ENCODE measurements at regions of chr10 and their contacts with region 1.

Region 1: DNA sequence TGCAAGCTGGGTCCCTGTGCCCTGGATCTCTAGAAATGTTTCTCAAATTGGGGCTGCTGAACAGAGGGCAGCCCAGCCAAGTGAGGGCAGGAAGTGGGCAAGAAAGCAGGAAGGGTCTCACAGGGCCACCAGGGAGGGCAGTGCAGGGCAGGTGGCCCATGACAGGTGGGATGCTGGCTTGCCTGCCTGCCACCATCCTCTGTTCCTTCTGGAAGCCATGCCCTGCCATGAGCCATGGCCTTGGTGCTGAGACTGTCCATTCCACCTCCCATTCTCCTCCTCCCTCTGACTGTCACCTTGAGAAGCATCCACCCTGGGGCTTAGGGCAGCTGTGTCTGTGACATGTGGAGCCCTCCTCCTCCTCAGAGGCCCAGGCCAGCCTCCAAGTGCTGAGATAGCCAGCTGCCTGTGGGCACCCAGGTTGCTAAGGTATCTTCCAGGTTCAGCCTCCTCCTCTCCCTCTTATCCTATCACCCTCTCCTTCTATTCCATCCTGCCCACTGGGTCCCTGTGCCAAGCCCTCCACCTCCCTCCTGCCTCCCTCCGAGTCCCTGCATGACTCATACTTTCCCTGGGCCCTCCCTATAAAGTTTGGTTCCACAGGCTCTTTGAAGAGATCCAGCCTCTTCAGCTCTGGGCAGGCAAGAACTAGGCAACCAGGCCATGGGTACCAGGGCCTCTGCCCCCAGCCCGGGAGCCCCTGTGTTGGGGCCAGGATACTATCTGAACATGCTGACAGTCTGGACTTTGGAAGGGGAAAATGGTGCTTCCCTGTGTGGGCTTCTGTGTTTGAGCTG is 1.3 kb downstream of the VSIR start:
- DNase-seq: peak in 3 of 14 experiments; percentile 44 to 54 (median 52)
- ATAC-seq: no peak
- H3K4me3 ChIP-seq: peak overlapping the region; percentile 90
- H3K4me3 Mint-ChIP-seq: peak overlapping the region; percentile 94
- H3K27ac ChIP-seq: peak overlapping the region; percentile 75 to 88
- H3K27ac Mint-ChIP-seq: peak overlapping the region; percentile 95
- H3K4me1 ChIP-seq: peaks cover 78% of the 10 kb centered on the region
- H3K4me1 Mint-ChIP-seq: peaks cover 88% of the 10 kb centered on the region
- H3K27me3 ChIP-seq: no peaks in the 10 kb centered on the region
- H3K27me3 Mint-ChIP-seq: no peaks in the 10 kb centered on the region
- CTCF ChIP-seq: no peak

Region 2: DNA sequence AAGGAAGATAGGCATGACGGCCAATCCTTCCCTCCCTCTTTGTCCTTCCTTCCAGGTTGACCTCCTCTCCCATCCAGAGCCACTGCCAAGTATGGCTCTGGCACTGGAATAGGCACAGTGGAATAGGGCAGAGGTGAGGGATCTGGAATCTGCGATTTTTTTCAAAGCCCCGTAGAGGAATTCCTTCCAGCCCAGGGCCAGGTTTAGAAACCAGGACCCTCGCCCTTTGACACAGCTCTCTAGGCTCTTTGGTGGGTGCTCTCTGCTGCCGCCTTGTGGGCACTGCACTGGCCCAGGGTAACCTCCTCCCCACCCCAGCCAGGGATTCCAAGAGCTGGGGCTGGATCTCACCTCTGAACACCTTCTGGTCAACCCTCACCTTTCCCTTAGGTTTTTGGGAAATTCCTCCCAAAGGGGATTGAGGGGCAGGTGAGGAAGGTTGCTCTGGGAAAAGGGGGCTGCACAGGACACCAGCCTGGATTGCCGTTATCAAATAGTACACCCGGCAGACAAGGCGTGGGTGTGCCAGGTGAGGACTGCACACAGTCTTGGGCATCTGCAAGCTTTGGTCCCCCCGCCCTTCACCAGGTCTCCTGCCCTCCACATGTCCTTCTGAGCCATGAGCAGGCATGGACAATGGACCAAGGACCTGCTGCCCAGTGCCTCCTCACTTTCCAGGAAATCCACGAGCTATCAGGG is 75.2 kb before region 1 on chr10:
- CTCF ChIA-PET with region 1: interaction called, 26 read pairs
- POLR2A ChIA-PET with region 1: interaction called, 20 read pairs
- intact Hi-C with region 1: no loop called
- DNase-seq: peak; percentile 54 to 84 (median 66)
- ATAC-seq: peak; percentile 83
- H3K4me3 ChIP-seq: no peak overlapping the region
- H3K4me3 Mint-ChIP-seq: no peak overlapping the region
- H3K27ac ChIP-seq: no peak overlapping the region
- H3K27ac Mint-ChIP-seq: peak overlapping the region; percentile 33
- H3K4me1 ChIP-seq: peaks cover 65% of the 10 kb centered on the region
- H3K4me1 Mint-ChIP-seq: peaks cover 29% of the 10 kb centered on the region
- H3K27me3 ChIP-seq: no peaks in the 10 kb centered on the region
- H3K27me3 Mint-ChIP-seq: no peaks in the 10 kb centered on the region
- CTCF ChIP-seq: peak; percentile 70

Region 3: GRCh38 chr10:71727738-71728737 is 44.0 kb before region 1 on chr10:
- CTCF ChIA-PET with region 1: interaction called, 25 read pairs
- POLR2A ChIA-PET with region 1: interaction called, 67 read pairs
- intact Hi-C with region 1: loop called (anchors 1 kb)
- DNase-seq: peak; percentile 56 to 91 (median 73)
- ATAC-seq: peak; percentile 65
- H3K4me3 ChIP-seq: peak overlapping the region; percentile 10
- H3K4me3 Mint-ChIP-seq: peak overlapping the region; percentile 73
- H3K27ac ChIP-seq: peak overlapping the region; percentile 74 to 88
- H3K27ac Mint-ChIP-seq: peak overlapping the region; percentile 96
- H3K4me1 ChIP-seq: peaks cover 100% of the 10 kb centered on the region
- H3K4me1 Mint-ChIP-seq: peaks cover 79% of the 10 kb centered on the region
- H3K27me3 ChIP-seq: no peaks in the 10 kb centered on the region
- H3K27me3 Mint-ChIP-seq: no peaks in the 10 kb centered on the region
- CTCF ChIP-seq: no peak

Region 4: GRCh38 chr10:71748671-71749191 is 23.3 kb before region 1 on chr10:
- CTCF ChIA-PET with region 1: interaction called, 27 read pairs
- POLR2A ChIA-PET with region 1: interaction called, 416 read pairs
- intact Hi-C with region 1: loop called (anchors 2 kb)
- DNase-seq: peak; percentile 59 to 94 (median 74)
- ATAC-seq: peak; percentile 92
- H3K4me3 ChIP-seq: no peak overlapping the region
- H3K4me3 Mint-ChIP-seq: peak overlapping the region; percentile 75
- H3K27ac ChIP-seq: peak overlapping the region; percentile 74 to 75
- H3K27ac Mint-ChIP-seq: peak overlapping the region; percentile 96
- H3K4me1 ChIP-seq: peaks cover 100% of the 10 kb centered on the region
- H3K4me1 Mint-ChIP-seq: peaks cover 97% of the 10 kb centered on the region
- H3K27me3 ChIP-seq: no peaks in the 10 kb centered on the region
- H3K27me3 Mint-ChIP-seq: no peaks in the 10 kb centered on the region
- CTCF ChIP-seq: peak; percentile 47

Region 5: GRCh38 chr10:71850637-71851464 is 78.8 kb after region 1 on chr10 and contains the start of gene PSAP:
- CTCF ChIA-PET with region 1: interaction called, 6 read pairs
- POLR2A ChIA-PET with region 1: interaction called, 8 read pairs
- intact Hi-C with region 1: loop called (anchors 1 to 2 kb)
- DNase-seq: peak; percentile 97 to 99 (median 98)
- ATAC-seq: peak; percentile 96
- H3K4me3 ChIP-seq: peak within 1 kb of the TSS; percentile 99
- H3K4me3 Mint-ChIP-seq: peak within 1 kb of the TSS; percentile 96
- H3K27ac ChIP-seq: peak within 1 kb of the TSS; percentile 47 to 85
- H3K27ac Mint-ChIP-seq: peak within 1 kb of the TSS; percentile 85
- H3K4me1 ChIP-seq: peaks cover 33% of the 10 kb centered on the region
- H3K4me1 Mint-ChIP-seq: peaks cover 51% of the 10 kb centered on the region
- H3K27me3 ChIP-seq: no peaks in the 10 kb centered on the region
- H3K27me3 Mint-ChIP-seq: no peaks in the 10 kb centered on the region
- CTCF ChIP-seq: no peak
- total RNA-seq, gene PSAP: 191 to 206 TPM

Region 6: DNA sequence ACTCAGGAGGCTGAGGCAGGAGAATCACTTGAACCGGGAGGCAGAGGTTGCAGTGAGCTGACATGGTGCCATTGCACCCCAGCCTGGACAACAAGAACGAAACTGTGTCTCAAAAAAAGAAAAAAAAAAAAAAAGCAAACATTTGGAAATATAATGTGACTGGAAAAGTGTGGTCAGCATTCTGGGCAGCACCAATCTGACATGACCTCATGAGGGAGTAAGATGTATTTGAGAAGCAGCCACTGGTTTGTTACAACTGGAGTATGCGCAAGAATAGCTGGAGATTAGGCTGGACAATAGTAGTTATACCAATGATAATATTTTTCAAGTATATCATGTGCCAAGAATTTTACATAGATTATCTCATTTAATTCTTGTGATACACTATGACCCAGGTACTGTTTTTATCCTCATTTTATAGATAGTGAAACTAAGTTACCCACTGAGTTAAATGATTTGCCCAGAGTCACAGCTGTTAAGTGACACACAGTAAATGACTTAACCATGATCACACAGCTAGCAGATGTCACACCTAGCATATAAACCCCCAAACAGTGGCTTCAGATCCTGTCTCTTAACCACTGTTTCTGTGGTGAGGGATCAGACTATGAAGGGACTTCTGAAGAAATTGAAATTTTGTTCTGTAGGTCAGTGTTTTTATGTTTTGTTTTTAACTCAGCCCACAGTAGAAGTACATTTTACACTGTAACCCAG is 931.0 kb after region 1 on chr10:
- CTCF ChIA-PET with region 1: no interaction called
- POLR2A ChIA-PET with region 1: no interaction called
- intact Hi-C with region 1: no loop called
- DNase-seq: peak in 1 of 14 experiments; percentile 7
- ATAC-seq: no peak
- H3K4me3 ChIP-seq: no peak overlapping the region
- H3K4me3 Mint-ChIP-seq: no peak overlapping the region
- H3K27ac ChIP-seq: no peak overlapping the region
- H3K27ac Mint-ChIP-seq: no peak overlapping the region
- H3K4me1 ChIP-seq: no peaks in the 10 kb centered on the region
- H3K4me1 Mint-ChIP-seq: peaks cover 13% of the 10 kb centered on the region
- H3K27me3 ChIP-seq: no peaks in the 10 kb centered on the region
- H3K27me3 Mint-ChIP-seq: no peaks in the 10 kb centered on the region
- CTCF ChIP-seq: no peak